ENCODE measurements at regions of chr4 and their contacts with region 1.

Region 1: GRCh38 chr4:113761620-113762185 is at the start of gene CAMK2D:
- DNase-seq: peak in 1 of 2 donors; percentile 96
- H3K4me3 ChIP-seq: peak within 1 kb of the TSS; percentile 78 to 91
- H3K27ac ChIP-seq: peak within 1 kb of the TSS; percentile 99
- H3K4me1 ChIP-seq: peaks cover 16% of the 10 kb centered on the region
- H3K27me3 ChIP-seq: no peaks in the 10 kb centered on the region
- CTCF ChIP-seq: peak in 2 of 3 experiments; percentile 38 to 56
- POLR2A ChIP-seq: peak in 1 of 2 donors; percentile 17
- total RNA-seq, gene CAMK2D: 50.3 TPM

Region 2: GRCh38 chr4:113292371-113293042 is 469.2 kb before region 1 on chr4:
- intact Hi-C with region 1: loop called (anchors 10 kb)
- DNase-seq: no peak
- H3K4me3 ChIP-seq: peak overlapping the region; percentile 9 to 34
- H3K27ac ChIP-seq: peak overlapping the region; percentile 87
- H3K4me1 ChIP-seq: peaks cover 10% of the 10 kb centered on the region
- H3K27me3 ChIP-seq: no peaks in the 10 kb centered on the region
- CTCF ChIP-seq: no peak
- POLR2A ChIP-seq: no peak

Region 3: DNA sequence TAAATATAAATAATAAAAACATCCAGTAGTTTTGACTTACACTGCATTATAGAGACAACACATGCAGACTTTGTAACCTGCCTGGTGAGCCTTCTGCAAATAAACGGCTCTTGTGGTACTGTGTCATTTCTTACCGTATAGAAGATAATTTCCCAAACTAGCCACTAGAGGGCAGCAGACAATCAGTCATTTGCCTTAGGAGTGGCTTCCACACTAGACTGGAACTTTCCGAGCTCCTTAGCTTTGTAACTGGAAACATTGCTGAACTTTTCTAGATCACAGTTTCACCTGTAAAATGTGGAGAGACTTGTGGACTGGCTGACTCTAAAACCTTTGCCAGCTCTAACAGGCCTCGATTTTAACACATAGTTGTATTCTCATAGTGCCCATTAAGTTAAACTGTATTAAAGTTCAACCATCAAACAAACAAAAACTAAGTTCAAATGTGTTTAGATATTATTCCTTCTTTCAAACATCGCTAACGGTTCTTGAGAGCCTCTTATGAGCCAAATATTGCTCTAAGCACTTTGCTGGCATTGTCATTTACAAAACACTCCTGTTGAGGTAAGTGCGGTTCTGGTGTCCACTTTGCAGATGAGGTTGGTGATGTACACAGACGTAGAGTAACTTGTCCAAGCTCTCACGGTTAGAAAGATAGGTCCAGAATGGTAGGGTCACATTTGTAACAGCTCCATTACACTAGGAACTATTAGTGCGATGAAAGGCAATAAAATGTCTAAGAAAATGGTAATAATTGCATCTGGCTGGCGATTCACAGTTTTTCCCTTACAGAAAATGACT is 366.8 kb before region 1 on chr4:
- intact Hi-C with region 1: loop called (anchors 5 kb)
- DNase-seq: no peak
- H3K4me3 ChIP-seq: no peak overlapping the region
- H3K27ac ChIP-seq: peak overlapping the region; percentile 56
- H3K4me1 ChIP-seq: no peaks in the 10 kb centered on the region
- H3K27me3 ChIP-seq: no peaks in the 10 kb centered on the region
- CTCF ChIP-seq: peak; percentile 75 to 94 (median 78)
- POLR2A ChIP-seq: no peak

Region 4: GRCh38 chr4:113547487-113548042 is 214.1 kb before region 1 on chr4:
- intact Hi-C with region 1: loop called (anchors 5 kb)
- DNase-seq: peak in 1 of 2 donors; percentile 89
- H3K4me3 ChIP-seq: no peak overlapping the region
- H3K27ac ChIP-seq: peak overlapping the region; percentile 60
- H3K4me1 ChIP-seq: peaks cover 12% of the 10 kb centered on the region
- H3K27me3 ChIP-seq: no peaks in the 10 kb centered on the region
- CTCF ChIP-seq: peak; percentile 83 to 94 (median 84)
- POLR2A ChIP-seq: no peak

Region 5: DNA sequence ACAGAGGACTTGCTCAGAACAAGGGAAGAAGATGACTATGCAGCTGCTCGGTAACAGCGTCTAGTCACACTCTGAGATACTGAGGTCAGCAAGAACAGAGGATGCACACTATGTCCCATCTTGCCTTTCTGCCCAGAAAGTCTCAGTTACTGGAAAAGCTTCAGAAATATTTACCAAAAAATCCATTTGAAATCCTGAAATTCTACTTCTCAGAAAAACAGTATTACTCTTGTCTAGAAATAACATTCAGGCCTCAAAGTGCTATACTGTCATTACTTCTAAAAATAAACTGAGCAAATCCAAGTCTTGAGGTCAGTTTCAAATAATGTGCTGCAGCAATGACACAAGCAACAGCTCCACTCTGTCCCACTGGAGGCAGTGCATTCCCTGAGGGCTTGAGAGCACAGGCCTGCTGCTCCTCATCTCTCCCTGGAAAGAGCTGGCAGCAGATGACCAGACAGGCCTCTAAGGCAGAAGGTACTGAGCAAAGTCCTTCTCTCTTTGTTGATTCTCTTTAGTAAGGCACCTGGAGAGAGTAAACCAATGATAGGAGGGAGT is 77.1 kb before region 1 on chr4:
- intact Hi-C with region 1: loop called (anchors 5 kb)
- DNase-seq: no peak
- H3K4me3 ChIP-seq: no peak overlapping the region
- H3K27ac ChIP-seq: peak overlapping the region; percentile 42
- H3K4me1 ChIP-seq: peaks cover 19% of the 10 kb centered on the region
- H3K27me3 ChIP-seq: no peaks in the 10 kb centered on the region
- CTCF ChIP-seq: peak in 1 of 3 experiments; percentile 16
- POLR2A ChIP-seq: no peak

Measured in vagina (tissue), 2 donors.